Dorsolateral prefrontal cortex (tissue), 120 donors: ENCODE measurements at regions of chr19 and their contacts with region 1.

Region 1: DNA sequence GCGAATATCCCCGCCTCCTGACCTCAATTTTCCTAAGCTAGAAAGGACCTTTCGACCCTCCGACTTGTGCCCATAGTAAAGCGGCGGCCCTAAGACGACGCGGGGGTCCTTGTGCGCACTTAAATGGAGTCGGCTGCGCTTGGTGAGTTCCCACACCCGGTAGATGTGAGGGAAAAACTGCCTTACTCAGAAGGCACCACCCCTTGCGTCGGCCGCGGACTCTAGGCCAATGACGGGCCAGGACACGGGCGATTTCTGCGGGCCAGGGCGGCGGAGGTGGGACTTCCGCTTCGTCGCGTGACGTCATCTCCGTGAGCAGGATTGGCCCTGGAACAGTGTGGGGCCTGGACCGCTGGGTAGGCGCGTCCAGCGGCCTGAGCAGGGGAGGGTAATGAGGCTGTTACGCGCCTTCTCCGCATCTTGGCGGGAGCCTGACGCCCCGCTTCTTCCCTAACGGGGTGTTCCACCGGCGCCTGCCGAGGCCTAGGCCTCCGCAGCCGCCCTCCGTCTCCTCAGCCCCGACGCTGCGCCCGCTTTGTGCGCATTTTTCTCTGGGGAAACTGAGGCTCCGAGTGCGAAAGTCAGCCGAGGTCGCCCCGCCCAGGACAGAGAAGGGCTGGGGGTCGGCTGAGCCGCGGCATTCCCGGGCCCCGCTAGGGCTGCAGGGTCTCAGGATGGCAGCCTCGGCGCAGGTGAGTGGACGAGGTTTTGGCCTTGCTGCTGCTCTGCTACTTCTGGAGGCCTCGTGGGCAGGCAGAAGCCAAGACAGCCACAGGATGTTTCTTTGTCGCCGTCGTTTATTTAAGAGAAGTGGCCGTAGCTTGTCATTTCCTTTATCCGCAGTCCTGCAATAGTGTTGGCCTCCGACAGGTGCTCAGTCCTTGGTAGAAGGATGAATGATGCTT is at the start of gene ZNF543:
- DNase-seq: peak; percentile 94 to 98 (median 97)
- H3K4me3 ChIP-seq: peak within 1 kb of the TSS; percentile 66 to 98 (median 93)
- H3K27ac ChIP-seq: peak within 1 kb of the TSS in 57 of 59 donors; percentile 38 to 93 (median 81)
- H3K27me3 ChIP-seq: no peaks in the 10 kb centered on the region
- CTCF ChIP-seq: peak in 13 of 56 donors; percentile 9 to 29 (median 18)
- total RNA-seq, gene ZNF543: 10.1 to 23.0 (median 14.9) TPM

Region 2: DNA sequence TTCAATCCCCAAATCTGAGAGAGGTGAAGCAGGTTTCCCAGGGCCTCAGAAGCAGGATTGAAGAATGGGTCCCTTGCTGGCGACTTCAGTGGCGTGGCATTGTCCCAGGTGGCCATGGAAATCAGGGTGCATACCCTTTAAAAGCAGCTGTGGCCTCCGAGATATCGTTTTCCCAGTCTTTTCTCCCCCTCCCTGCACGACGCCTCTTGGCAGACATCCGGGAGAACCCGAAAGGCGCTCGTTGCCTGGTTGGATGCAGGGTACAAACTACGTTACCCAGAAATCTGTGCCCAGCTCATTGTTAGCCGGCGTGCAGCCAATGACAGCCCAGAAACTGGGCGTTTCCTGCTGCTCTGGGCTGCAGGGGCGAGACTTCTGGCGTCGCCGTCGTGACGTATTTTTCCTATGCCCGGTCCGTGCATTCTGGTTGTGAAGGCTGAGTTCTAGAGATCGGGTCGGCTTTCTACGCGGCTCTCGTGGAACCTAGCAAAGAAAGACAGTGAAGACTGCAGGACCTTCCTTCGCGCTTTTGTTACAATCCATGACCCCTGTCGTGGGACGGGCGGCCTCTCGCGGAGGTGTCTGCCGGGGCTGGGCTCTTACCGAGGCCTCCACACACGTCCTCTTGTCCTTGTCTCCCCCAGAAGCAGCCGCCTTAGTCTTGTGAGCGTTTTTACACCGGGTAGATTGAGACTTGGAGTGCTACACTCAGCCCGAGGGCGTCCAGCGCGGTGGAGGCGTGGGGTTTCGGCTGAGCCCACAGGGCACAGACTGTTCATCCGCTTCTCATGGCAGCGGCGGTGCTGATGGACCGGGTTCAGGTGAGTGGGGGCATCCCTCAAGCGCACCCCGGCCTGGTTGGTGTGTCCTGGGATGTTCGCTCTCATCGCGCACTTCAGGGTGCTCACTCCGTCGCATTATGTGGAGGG is 30.7 kb after region 1 on chr19 and contains the start of gene ZNF304:
- intact Hi-C with region 1: loop called in 1 of 2 experiments (anchors 2 kb)
- DNase-seq: peak; percentile 89 to 98 (median 97)
- H3K4me3 ChIP-seq: peak within 1 kb of the TSS; percentile 73 to 100 (median 96)
- H3K27ac ChIP-seq: peak within 1 kb of the TSS in 52 of 59 donors; percentile 15 to 92 (median 70)
- H3K27me3 ChIP-seq: no peaks in the 10 kb centered on the region
- CTCF ChIP-seq: peak in 22 of 56 donors; percentile 6 to 40 (median 24)
- total RNA-seq, gene ZNF304: 8.4 to 20.2 (median 13.3) TPM

Region 3: DNA sequence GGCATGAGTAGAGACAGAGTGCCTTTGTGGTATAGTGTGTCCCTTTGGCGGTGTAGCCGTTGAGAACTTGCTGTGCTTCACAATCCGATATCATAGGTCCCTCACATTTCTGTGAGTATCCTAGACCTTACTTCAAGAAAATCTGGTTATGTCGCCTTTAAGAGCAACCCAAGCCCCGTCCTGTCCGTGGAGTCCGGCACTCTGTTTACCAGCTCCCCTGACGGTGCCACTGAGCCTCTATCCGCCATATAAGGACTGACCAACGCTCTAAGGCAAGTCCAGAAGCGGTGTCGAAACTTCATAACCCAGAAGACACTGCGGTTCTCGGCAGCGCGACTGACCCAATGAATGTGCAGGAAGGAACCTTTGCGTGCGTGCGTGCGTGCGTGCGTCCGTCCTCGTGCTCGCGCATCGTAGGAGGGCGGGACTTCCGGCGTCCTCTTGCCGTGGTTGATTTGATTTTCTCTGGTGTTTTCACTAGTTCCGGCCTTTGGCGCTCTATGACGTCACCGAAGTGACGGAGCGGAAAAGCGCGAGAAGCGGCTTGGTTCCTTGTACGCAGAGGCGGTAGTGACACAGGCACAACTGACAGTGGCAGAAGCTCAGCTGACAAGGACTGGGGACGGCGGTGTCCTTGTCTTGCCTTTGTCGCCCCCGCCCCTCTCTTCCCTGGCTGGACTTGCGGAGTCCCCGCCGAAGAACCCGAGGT is 42.7 kb after region 1 on chr19 and contains the starts of genes TRAPPC2B and ZNF547:
- intact Hi-C with region 1: loop called in 1 of 2 experiments (anchors 2 kb)
- DNase-seq: peak; percentile 96 to 100 (median 99)
- H3K4me3 ChIP-seq: peak within 1 kb of the TSS; percentile 63 to 95 (median 88)
- H3K27ac ChIP-seq: peak within 1 kb of the TSS; percentile 52 to 95 (median 87)
- H3K27me3 ChIP-seq: no peaks in the 10 kb centered on the region
- CTCF ChIP-seq: peak in 18 of 56 donors; percentile 5 to 45 (median 22)
- total RNA-seq, gene TRAPPC2B: 4.5 to 17.8 (median 10.3) TPM
- total RNA-seq, gene ZNF547: 3.8 to 19.8 (median 10.0) TPM

Region 4: DNA sequence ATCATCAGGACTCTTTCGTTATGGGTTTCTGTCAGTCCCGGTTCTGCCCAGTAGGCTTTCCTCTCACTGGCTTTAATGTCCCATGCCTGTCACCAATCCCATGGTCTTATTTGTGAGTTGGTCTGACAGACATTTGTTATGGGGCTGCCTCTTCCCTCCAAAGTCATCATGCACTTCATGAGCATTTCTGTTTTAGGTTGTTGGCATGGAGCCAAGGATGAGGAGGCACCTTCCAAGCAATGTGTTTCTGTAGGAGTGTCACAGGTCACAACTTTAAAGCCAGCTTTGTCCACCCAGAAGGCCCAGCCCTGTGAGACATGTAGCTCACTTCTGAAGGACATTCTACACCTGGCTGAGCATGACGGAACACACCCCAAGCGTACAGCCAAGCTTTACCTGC is 99.0 kb after region 1 on chr19:
- intact Hi-C with region 1: no loop called
- DNase-seq: no peak
- H3K4me3 ChIP-seq: no peak overlapping the region
- H3K27ac ChIP-seq: no peak overlapping the region
- H3K27me3 ChIP-seq: no peaks in the 10 kb centered on the region
- CTCF ChIP-seq: no peak